AG04449 (cell line): ENCODE measurements at regions of chr3 and their contacts with region 1.

Region 1: DNA sequence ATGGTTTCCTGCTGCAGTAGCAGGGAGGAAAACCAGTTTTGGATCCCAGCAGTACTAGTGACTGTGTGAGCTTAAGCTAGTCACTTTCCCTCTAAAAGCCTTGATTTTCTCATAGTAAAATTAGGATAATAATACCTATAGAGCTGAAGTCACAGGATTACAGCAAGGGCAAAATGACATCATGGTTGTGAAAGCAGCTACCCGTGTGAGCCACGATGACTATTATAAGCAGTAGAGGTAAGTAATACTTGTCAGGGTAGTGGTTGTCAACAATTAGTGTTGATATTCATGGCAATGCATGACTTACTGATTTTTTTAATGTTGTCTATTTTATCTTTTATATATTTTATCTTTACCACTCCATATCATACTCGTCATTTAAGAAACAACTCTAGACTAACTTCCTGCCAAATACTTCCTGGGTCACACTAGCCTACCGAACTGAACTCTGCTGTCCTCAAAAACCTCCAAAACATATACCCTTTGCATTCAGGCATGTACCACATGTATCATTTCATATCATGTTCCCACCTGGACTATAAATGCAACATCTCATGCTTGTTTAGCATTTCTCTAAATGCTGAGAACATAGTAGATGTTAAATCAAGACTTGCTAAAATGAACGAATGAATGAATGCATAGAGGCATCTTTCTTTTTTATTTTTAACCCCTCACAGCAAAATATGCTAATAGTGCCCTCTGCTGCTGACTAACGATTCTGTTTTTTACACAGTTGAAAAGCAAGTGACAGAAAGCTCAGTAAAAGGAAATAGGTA is 172.6 kb downstream of the P3H2 start:
- DNase-seq: no peak
- H3K4me3 ChIP-seq: no peak overlapping the region
- CTCF ChIP-seq: peak; percentile 27

Region 2: DNA sequence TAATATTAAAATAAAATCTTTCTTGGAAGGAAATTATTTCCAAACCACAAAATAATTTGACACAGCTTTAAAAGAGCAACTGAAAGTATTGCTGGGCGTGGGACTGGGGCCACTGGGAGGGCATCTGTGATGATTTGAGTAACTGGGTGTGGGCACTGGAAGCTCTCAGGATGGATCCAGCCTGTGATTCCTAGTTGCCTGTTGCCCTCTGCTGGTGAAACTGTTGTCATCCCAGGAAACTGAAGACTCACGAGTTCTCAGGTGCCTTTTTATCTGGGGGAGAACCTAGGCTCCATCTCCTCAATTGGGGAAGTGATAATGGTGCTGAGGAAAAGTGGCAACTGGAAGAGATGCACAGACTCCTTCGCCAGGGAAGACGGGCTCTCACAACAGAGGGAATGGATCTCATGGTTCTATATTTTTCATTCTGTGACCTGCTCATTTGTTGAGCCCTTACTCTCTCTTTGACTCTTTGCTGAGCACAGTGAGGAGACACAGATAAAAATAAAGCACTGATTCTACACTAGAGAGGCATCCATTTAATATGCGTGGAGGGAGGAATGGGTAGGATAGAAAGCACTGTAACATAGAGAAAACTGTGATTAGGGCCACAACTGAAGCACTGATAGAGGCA is 714.8 kb before region 1 on chr3:
- CTCF ChIA-PET with region 1: interaction called, 11 read pairs
- POLR2A ChIA-PET with region 1: no interaction called
- DNase-seq: peak; percentile 14
- H3K4me3 ChIP-seq: no peak overlapping the region
- CTCF ChIP-seq: peak; percentile 76

Region 3: DNA sequence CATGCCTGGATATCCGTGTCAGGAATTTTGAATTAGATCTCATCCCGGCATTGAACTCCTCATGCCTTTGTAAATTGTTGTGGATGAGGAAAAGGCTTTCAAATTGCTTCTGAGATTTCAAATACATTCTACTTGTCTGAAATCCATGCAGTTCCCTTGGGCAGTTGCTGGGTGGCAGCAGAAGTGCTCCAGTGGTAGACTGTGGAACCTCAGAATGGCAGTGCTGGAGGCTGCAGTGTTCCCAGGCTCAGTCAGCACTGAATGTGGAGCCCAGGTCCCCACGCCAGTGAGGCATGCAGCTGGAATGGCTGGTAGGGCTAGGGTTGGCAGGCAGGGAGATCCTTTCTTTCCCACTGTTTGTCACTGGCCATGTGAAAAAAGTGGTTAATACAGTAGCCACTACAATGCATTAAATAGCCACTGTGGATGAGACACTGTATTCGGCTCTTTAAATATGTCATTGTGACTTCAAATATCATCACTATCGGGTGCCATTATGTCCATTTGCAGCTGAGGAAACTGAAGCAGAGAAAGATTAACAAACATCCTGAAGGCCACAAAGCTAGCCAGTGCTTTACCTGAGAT is 677.8 kb before region 1 on chr3:
- CTCF ChIA-PET with region 1: interaction called, 289 read pairs
- POLR2A ChIA-PET with region 1: no interaction called
- DNase-seq: peak; percentile 74
- H3K4me3 ChIP-seq: no peak overlapping the region
- CTCF ChIP-seq: peak; percentile 85

Region 4: GRCh38 chr3:189276481-189277219 is 671.5 kb before region 1 on chr3:
- CTCF ChIA-PET with region 1: interaction called, 289 read pairs
- POLR2A ChIA-PET with region 1: no interaction called
- DNase-seq: peak; percentile 85
- H3K4me3 ChIP-seq: no peak overlapping the region
- CTCF ChIP-seq: no peak

Region 5: GRCh38 chr3:189937307-189938124 is 10.6 kb before region 1 on chr3:
- CTCF ChIA-PET with region 1: interaction called, 14 read pairs
- POLR2A ChIA-PET with region 1: no interaction called
- DNase-seq: peak; percentile 92
- H3K4me3 ChIP-seq: no peak overlapping the region
- CTCF ChIP-seq: no peak